Activated naive CD4-positive, alpha-beta T cell treated with anti-CD3 and anti-CD28 coated beads for 36 hours (primary cell): ENCODE measurements at regions of chr18 and their contacts with region 1.

Region 1: DNA sequence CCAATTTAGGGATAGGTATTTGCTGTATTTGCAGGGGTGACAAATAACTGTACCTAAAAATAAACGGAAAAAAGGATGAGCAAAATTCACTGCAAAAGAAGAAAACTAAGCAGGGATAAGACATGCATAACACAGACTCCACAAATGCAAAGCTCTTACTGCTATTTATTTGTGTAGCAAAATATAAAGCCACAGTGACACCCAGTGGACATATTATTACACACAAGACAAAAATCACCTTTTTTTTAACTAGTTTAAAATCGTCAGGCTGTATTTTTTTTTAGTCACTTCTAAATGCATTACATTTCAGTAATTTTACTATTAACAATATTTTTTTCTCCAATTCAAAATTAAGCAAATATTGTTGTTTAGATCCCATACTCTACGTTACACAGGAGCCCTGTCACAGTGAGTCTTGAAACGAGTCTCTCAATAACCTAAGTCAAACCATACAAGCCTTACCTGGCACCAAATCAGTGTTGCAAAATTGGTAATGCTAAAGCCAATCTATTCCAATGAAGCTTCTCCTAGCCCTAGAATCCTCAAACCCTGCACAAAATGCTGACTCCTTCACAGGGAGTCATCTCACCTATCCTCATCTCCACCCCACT is 23.7 kb downstream of the METTL4 start:
- DNase-seq: no peak
- H3K4me3 Mint-ChIP-seq: no peak overlapping the region
- H3K27ac Mint-ChIP-seq: no peak overlapping the region
- H3K4me1 Mint-ChIP-seq: peaks cover 4% of the 10 kb centered on the region
- H3K27me3 Mint-ChIP-seq: no peaks in the 10 kb centered on the region

Region 2: DNA sequence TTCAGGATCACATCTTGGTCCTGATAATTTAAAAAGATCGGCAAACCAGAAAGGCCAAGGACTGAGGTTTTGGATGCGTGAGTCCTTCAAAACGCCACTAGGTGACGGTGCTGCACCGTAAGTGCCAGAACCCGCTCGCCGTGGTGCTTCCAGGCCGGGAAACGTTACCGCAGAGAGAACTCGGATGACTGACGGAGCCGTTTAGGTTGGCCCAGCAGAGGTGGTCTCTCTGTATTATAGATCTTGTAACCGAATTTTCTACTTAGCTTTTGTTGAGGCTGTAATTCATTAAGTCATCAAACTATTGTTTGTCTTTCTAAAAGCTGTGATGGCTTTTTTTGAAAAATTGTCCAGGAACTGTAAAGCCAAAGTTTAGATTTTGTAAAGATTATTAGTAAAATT is 1682.7 kb before region 1 on chr18:
- CTCF ChIA-PET with region 1: no interaction called
- intact Hi-C with region 1: loop called (anchors 2 kb)
- DNase-seq: peak; percentile 79
- H3K4me3 Mint-ChIP-seq: no peak overlapping the region
- H3K27ac Mint-ChIP-seq: no peak overlapping the region
- H3K4me1 Mint-ChIP-seq: peaks cover 2% of the 10 kb centered on the region
- H3K27me3 Mint-ChIP-seq: peaks cover 9% of the 10 kb centered on the region

Region 3: GRCh38 chr18:2104620-2105462 is 442.7 kb before region 1 on chr18:
- CTCF ChIA-PET with region 1: interaction called, 16 read pairs
- intact Hi-C with region 1: loop called (anchors 1 kb)
- DNase-seq: peak; percentile 61
- H3K4me3 Mint-ChIP-seq: no peak overlapping the region
- H3K27ac Mint-ChIP-seq: no peak overlapping the region
- H3K4me1 Mint-ChIP-seq: no peaks in the 10 kb centered on the region
- H3K27me3 Mint-ChIP-seq: peaks cover 5% of the 10 kb centered on the region

Region 4: DNA sequence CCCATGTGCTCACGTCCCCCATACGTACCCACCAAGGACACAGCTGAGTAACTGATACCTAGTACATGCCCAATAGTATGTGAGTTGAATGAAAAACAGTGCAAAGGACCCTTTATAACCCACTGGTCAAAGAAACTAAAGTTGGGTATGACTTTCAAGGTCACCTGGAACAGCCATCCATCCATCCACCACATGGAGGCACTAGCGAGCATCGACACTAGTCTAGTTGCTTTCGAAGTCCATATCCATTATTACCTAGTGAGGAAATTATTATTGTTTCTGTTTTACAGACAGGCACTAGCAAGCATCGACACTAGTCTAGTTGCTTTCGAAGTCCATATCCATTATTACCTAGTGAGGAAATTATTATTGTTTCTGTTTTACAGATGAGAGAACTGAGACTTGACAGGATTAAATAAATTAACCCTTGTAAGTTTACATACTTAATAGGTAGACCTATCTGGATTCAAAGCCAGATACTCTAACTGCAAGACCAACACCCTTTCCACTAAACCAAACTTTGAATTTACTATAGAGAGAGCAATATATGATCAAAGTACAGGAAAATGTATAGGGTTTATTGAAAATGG is 209.9 kb before region 1 on chr18:
- CTCF ChIA-PET with region 1: interaction called, 39 read pairs
- intact Hi-C with region 1: loop called (anchors 1 kb)
- DNase-seq: peak; percentile 67
- H3K4me3 Mint-ChIP-seq: no peak overlapping the region
- H3K27ac Mint-ChIP-seq: no peak overlapping the region
- H3K4me1 Mint-ChIP-seq: no peaks in the 10 kb centered on the region
- H3K27me3 Mint-ChIP-seq: peaks cover 5% of the 10 kb centered on the region